Tibial artery (tissue), 4 donors: ENCODE measurements at regions of chr19 and their contacts with region 1.

Region 1: GRCh38 chr19:40139533-40140287 is 49.0 kb upstream of the ZNF780A start:
- DNase-seq: no peak
- H3K4me3 ChIP-seq: no peak overlapping the region
- H3K27ac ChIP-seq: no peak overlapping the region
- H3K4me1 ChIP-seq: no peaks in the 10 kb centered on the region
- H3K27me3 ChIP-seq: peaks cover 0 to 10% of the 10 kb centered on the region in 2 donors
- CTCF ChIP-seq: peak; percentile 62 to 70

Region 2: DNA sequence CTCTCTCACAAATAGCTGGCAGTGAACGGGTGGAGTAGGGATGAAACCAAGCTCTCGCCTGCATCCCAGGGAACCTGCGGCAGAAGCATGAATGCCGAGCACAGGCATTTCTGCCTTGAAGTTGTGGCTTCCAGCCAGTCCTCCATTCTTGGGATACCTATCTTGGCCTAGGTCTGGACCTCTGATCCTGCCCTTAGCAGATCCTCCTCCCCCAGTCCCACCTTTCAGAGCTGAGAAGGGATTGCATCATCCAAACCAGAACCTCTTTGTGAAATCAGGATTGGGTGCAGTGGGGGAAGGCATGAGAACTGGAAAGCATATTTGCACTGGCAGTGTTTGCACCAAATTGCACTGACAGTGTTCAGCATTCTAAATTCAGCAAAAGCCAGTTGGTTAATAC is 54.8 kb before region 1 on chr19:
- intact Hi-C with region 1: no loop called
- DNase-seq: no peak
- H3K4me3 ChIP-seq: no peak overlapping the region
- H3K27ac ChIP-seq: no peak overlapping the region
- H3K4me1 ChIP-seq: peaks cover 0 to 14% (median 8%) of the 10 kb centered on the region in 4 donors
- H3K27me3 ChIP-seq: no peaks in the 10 kb centered on the region
- CTCF ChIP-seq: no peak

Region 3: GRCh38 chr19:40190891-40191835 is 51.5 kb after region 1 on chr19 and contains the start of gene MAP3K10:
- intact Hi-C with region 1: no loop called
- DNase-seq: peak; percentile 71 to 83
- H3K4me3 ChIP-seq: peak within 1 kb of the TSS; percentile 97 to 98
- H3K27ac ChIP-seq: peak within 1 kb of the TSS; percentile 100
- H3K4me1 ChIP-seq: peaks cover 0 to 37% (median 15%) of the 10 kb centered on the region in 4 donors
- H3K27me3 ChIP-seq: no peaks in the 10 kb centered on the region
- CTCF ChIP-seq: no peak

Region 4: GRCh38 chr19:40221858-40222837 is 82.4 kb after region 1 on chr19:
- intact Hi-C with region 1: loop called (anchors 2 kb)
- DNase-seq: peak; percentile 81 to 91
- H3K4me3 ChIP-seq: no peak overlapping the region
- H3K27ac ChIP-seq: no peak overlapping the region
- H3K4me1 ChIP-seq: peaks cover 0 to 30% (median 12%) of the 10 kb centered on the region in 4 donors
- H3K27me3 ChIP-seq: peaks cover 8 to 73% of the 10 kb centered on the region in 2 donors
- CTCF ChIP-seq: peak; percentile 92 to 93

Region 5: DNA sequence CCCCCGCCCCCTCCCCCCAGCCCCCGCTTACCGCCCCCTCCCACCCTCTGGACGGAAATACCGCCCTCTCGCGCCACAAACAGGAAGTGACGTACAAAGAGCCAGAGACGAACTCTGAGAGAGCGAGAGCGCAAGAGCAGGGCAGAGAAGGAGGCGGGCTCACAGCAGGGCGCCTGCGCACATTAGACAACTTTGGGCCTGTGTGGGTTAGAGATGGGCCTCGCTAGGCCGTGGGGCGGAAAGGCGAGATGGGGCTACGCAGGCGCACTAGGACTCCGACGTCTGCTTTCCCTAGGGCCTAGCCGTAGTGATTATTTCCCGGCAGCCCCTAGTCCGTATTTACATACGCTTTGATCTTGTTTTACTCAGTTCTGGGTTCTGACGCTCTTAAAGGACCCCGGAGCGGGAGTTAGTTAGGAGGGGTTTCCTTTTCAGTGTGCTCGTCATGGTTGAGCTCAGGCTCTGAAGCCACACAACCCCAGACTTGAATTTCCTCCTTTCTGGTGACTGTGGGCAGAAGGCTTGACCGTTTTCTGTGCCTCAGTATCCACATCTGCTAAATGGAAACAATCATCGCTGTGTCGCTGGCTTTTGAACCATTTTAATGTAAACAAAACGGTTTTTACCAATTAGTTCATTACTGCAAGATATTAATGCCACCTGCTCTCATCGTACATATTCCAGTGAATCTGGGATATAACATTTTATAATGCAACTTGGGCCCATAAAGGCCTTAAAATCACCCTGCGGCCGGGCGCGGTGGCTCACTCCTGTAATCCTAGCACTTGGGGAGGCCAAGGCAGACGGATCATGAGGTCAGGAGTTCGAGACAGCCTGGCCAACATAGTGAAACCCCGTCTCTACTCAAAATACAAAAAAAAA is 145.9 kb after region 1 on chr19:
- intact Hi-C with region 1: no loop called
- DNase-seq: peak; percentile 98 to 100
- H3K4me3 ChIP-seq: peak overlapping the region; percentile 73 to 81
- H3K27ac ChIP-seq: peak overlapping the region; percentile 91 to 94
- H3K4me1 ChIP-seq: peaks cover 0 to 46% (median 30%) of the 10 kb centered on the region in 4 donors
- H3K27me3 ChIP-seq: no peaks in the 10 kb centered on the region
- CTCF ChIP-seq: no peak

Region 6: DNA sequence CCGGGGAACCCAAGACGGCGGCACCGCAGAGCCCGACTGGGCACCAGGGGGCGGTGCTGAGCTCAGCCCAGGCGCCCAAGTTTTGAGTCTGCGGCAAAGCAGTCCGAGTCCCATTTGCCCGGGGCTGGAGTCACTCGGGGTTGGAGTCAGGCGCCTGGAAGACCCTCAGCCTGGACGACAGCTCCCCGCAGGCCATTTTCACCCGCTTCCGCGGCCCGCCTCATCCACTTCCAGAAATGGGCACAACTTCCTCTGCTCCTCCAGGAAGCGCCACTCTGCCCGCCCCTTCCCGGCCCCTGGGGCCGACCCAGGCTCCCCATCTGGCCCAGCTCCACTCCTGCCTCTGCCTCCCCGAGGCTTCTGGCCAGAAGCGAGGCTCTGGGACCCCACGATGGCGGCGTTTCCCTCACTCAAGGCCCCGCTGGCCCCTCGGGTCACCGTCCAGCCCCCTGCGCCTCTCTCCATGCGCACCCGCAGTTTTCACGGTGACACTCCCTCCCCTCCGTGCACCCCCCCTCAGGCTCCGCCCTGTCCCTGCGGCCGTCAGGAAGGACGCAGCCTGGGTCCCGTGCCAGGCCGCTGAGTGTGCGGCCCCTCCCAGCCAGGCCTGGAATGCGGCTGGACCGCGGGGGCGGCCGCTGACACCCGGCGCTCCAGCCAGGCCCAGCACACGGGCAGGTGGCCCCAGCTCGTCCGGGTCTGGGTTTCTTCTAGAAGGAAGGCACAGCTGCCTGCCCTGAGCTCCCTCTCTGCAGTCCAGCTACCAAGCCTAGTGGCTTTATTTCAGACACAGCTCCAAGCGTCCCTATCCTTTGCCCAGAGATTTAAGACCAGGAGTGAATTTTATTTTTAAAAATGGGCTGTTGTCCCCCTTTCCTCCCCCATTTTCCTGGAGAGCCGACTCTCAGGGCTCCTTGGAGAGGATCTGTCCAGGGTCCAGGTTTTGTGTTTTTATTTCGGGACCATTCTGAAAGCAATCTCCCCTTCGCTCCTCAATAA is 281.4 kb after region 1 on chr19:
- intact Hi-C with region 1: no loop called
- DNase-seq: peak; percentile 92 to 98
- H3K4me3 ChIP-seq: peak overlapping the region; percentile 54 to 60
- H3K27ac ChIP-seq: peak overlapping the region; percentile 94 to 98
- H3K4me1 ChIP-seq: peaks cover 0 to 39% (median 34%) of the 10 kb centered on the region in 4 donors
- H3K27me3 ChIP-seq: peaks cover 0 to 3% of the 10 kb centered on the region in 2 donors
- CTCF ChIP-seq: peak; percentile 88 to 90